ENCODE measurements at regions of chr3 and their contacts with region 1.

Region 1: DNA sequence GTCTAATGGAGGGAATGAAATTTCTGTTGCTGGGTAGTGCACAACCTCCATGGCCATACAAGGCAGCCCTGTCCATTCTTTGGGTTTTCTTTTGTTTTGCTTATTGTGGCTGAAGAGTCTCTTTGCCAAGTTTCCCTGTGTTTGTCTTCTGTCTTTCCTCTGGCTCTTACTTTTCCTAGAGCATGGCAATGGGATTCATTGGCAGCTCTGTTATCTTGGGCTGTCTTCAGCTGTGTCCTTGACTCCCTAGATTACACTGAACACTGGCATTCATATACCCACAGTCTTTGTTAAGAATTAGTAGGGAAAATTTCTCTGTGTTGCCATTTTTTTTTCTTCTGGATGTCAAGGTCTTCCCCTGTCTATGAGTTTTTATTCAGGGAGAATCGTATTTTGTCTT is 16.1 kb upstream of the DCBLD2 start:
- DNase-seq: no peak
- ATAC-seq: peak; percentile 38 to 71 (median 51)
- H3K4me3 ChIP-seq: no peak overlapping the region
- H3K27ac ChIP-seq: peak overlapping the region in 1 of 12 donors; percentile 22
- H3K4me1 ChIP-seq: peaks cover 0 to 17% (median 0%) of the 10 kb centered on the region in 12 donors
- H3K27me3 ChIP-seq: no peaks in the 10 kb centered on the region
- CTCF ChIP-seq: no peak
- POLR2A ChIP-seq: no peak

Region 2: DNA sequence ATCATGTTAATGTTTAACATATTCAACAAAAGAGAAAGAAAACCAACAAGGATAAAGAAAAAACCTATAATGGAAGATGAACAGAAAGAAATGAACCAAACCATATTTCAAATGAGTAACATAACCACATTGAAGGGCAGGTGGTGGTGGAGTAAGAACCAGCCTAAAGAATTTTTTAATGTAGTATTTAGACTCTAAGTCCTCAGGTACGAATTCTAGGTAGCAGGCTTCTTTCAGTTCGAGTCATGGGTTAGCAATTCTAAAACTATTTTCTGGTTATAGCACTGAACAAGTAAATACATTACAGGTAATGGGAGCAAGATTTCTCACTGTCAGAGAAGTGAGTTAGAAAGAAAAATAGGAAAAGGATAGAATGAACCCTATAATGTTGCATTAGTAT is 40.5 kb before region 1 on chr3:
- intact Hi-C with region 1: loop called in 1 of 10 experiments (anchors 2 kb)
- DNase-seq: no peak
- ATAC-seq: no peak
- H3K4me3 ChIP-seq: no peak overlapping the region
- H3K27ac ChIP-seq: no peak overlapping the region
- H3K4me1 ChIP-seq: peaks cover 0 to 9% (median 0%) of the 10 kb centered on the region in 12 donors
- H3K27me3 ChIP-seq: no peaks in the 10 kb centered on the region
- CTCF ChIP-seq: no peak
- POLR2A ChIP-seq: no peak

Region 3: DNA sequence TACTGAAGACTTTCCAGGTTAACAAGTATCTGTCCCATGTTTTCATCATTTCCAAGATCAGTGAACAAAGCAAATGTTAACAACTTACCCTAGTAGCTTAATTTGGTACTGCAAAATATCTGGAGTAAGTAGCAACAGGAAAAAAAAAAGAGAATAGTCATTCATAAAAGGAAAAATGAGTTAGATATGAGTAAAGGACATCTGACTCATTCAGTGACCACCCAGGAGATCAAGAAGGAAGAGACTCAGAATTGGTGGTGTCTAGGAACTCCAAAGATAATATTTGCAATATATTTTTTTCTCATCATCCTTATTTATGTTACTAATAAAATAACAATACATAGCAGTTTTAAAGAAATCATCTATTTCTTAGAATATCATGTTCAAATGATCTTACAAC is 467.0 kb after region 1 on chr3:
- intact Hi-C with region 1: no loop called
- DNase-seq: no peak
- ATAC-seq: no peak
- H3K4me3 ChIP-seq: no peak overlapping the region
- H3K27ac ChIP-seq: no peak overlapping the region
- H3K4me1 ChIP-seq: no peaks in the 10 kb centered on the region
- H3K27me3 ChIP-seq: no peaks in the 10 kb centered on the region
- CTCF ChIP-seq: no peak
- POLR2A ChIP-seq: no peak